ENCODE measurements at regions of chr1 and their contacts with region 1.

Region 1: GRCh38 chr1:15409388-15410222 is at the start of gene EFHD2:
- DNase-seq: peak; percentile 80
- ATAC-seq: peak; percentile 84
- H3K4me3 ChIP-seq: peak within 1 kb of the TSS; percentile 100
- H3K27ac ChIP-seq: peak within 1 kb of the TSS; percentile 50
- H3K4me1 ChIP-seq: peaks cover 46% of the 10 kb centered on the region
- H3K27me3 ChIP-seq: no peaks in the 10 kb centered on the region
- CTCF ChIP-seq: no peak
- total RNA-seq, gene EFHD2: 192 and 271 TPM in 2 replicates

Region 2: GRCh38 chr1:15337656-15338402 is 71.8 kb before region 1 on chr1:
- CTCF ChIA-PET with region 1: interaction called, 3 read pairs
- POLR2A ChIA-PET with region 1: interaction called, 10 read pairs
- intact Hi-C with region 1: no loop called
- DNase-seq: peak; percentile 87
- ATAC-seq: peak; percentile 90
- H3K4me3 ChIP-seq: no peak overlapping the region
- H3K27ac ChIP-seq: peak overlapping the region; percentile 73
- H3K4me1 ChIP-seq: peaks cover 41% of the 10 kb centered on the region
- H3K27me3 ChIP-seq: no peaks in the 10 kb centered on the region
- CTCF ChIP-seq: no peak

Region 3: GRCh38 chr1:15354580-15354965 is 55.0 kb before region 1 on chr1:
- CTCF ChIA-PET with region 1: no interaction called
- POLR2A ChIA-PET with region 1: no interaction called
- intact Hi-C with region 1: loop called (anchors 1 kb)
- DNase-seq: peak; percentile 42
- ATAC-seq: no peak
- H3K4me3 ChIP-seq: no peak overlapping the region
- H3K27ac ChIP-seq: peak overlapping the region; percentile 85
- H3K4me1 ChIP-seq: peaks cover 71% of the 10 kb centered on the region
- H3K27me3 ChIP-seq: no peaks in the 10 kb centered on the region
- CTCF ChIP-seq: no peak

Region 4: DNA sequence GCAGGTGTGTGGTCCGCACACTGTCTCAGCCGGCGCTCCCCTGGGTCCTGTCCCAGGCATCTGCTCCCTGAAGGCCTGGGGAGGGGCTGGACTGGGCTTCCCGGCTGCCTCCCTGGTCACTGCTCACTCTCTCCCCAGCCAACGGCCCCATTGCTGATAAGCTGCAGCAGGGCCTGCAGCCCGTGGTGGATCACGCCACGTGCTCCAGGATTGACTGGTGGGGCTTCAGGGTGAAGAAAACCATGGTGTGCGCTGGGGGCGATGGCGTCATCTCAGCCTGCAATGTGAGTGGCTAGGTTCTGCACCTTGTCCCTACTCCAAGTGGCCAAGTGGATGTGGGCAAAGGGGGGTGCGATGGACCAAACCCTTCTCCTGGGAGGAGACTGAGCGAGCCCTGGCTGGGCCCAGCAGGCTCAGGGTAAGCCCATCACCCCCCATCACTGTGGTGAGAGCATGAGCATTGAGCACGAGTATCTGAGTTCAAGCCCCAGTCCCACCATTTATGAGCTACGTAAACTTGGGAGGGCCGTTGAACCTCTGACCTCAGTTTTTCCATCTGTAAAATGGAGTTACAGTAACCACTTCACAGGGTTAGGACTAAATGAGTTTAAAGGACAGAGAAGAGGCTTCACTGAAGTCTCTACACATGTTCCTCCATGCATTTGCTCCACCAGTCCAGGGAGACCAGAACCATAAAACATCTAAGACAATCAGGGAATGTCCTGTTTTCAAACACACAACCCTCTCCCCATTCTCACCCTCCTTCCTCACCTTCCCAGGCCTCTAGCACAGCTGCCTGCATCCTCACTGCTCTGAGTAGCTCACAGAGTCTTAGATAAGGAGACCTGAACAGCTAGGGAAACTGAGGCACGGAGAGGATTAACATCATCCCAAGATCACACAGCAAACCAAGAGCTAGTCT is 35.1 kb after region 1 on chr1:
- CTCF ChIA-PET with region 1: no interaction called
- POLR2A ChIA-PET with region 1: no interaction called
- intact Hi-C with region 1: no loop called
- DNase-seq: no peak
- ATAC-seq: no peak
- H3K4me3 ChIP-seq: no peak overlapping the region
- H3K27ac ChIP-seq: no peak overlapping the region
- H3K4me1 ChIP-seq: no peaks in the 10 kb centered on the region
- H3K27me3 ChIP-seq: no peaks in the 10 kb centered on the region
- CTCF ChIP-seq: no peak

Region 5: GRCh38 chr1:15538770-15539169 is 129.2 kb after region 1 on chr1:
- CTCF ChIA-PET with region 1: no interaction called
- POLR2A ChIA-PET with region 1: no interaction called
- intact Hi-C with region 1: no loop called
- DNase-seq: no peak
- ATAC-seq: no peak
- H3K4me3 ChIP-seq: no peak overlapping the region
- H3K27ac ChIP-seq: no peak overlapping the region
- H3K4me1 ChIP-seq: no peaks in the 10 kb centered on the region
- H3K27me3 ChIP-seq: no peaks in the 10 kb centered on the region
- CTCF ChIP-seq: no peak

Region 6: DNA sequence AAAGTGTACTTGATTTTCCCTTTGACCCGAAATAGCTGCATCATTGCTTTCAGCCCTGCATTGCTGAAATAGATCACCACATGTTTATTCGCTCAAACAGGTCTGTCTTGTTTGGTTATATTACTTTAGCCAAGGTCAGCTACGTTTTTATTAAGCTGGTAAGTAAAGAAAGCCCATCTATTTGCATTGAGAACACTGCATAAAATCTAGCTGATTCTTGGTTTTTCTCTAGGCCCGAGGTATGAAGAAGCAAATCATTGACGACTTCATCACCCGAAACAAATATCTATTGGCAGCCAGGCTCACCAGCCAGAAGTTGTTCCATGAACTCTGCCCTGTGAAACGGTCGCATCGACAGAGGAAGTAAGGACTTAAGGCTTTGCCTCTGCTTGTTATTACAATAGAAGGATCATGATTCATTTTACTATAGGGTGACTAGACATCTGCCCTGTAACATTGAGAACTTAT is 149.7 kb after region 1 on chr1:
- CTCF ChIA-PET with region 1: no interaction called
- POLR2A ChIA-PET with region 1: no interaction called
- intact Hi-C with region 1: no loop called
- DNase-seq: peak; percentile 87
- ATAC-seq: peak; percentile 92
- H3K4me3 ChIP-seq: peak overlapping the region; percentile 53; the same call in 1 of the 2 replicates
- H3K27ac ChIP-seq: peak overlapping the region; percentile 96
- H3K4me1 ChIP-seq: peaks cover 21% of the 10 kb centered on the region
- H3K27me3 ChIP-seq: no peaks in the 10 kb centered on the region
- CTCF ChIP-seq: no peak